ENCODE measurements at regions of chr18 and their contacts with region 1.

Region 1: DNA sequence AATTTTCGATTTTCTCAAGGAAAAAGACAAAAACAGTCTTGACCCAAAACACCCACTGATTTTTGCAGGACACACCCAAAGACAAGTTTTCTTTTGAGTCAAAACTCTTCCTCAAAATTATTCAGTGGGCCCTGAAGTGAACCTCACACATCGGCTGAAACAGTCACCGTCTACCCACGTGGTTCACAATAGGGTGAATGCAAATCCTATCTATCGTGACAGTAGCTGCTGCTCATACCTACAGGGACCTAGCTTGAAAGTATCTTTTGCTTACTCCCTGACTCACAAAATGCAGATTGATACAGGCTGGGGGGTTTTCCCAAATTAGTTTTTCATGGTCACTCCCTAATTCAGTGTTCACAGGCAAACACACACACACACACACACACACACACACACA is 10.7 kb upstream of the CD226 start:
- H3K4me3 ChIP-seq: no peak overlapping the region
- H3K27ac ChIP-seq: no peak overlapping the region
- H3K4me1 ChIP-seq: no peaks in the 10 kb centered on the region
- CTCF ChIP-seq: no peak

Region 2: DNA sequence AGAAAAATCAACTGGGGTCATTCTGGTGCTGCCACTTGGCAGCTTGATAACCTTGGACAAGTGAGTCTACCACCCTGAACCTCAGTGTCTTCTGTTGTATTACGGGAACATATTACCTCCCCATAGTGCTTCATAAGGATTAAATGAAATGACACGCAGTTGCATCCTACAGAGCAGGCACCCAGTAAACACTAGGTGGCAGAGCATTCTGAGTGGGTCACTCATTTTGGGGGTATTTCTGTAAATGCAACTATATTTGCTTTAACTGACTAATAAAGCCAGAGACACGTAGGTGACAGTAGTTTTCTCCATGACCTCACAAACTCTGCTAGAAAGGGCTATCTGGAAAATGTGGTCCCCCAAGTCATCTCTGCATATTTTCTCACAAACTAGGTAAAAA is 15.4 kb before region 1 on chr18:
- CTCF ChIA-PET with region 1: interaction called, 10 read pairs
- POLR2A ChIA-PET with region 1: no interaction called
- H3K4me3 ChIP-seq: no peak overlapping the region
- H3K27ac ChIP-seq: no peak overlapping the region
- H3K4me1 ChIP-seq: no peaks in the 10 kb centered on the region
- CTCF ChIP-seq: no peak

Measured in HEK293 (cell line).